Activated B cell treated with CpG ODN at 0.5 μM for 24 hours (primary cell): ENCODE measurements at regions of chr19 and their contacts with region 1.

Region 1: GRCh38 chr19:47063874-47064273 is 15.4 kb upstream of the TMEM160 start:
- DNase-seq: no peak
- ATAC-seq: no peak
- H3K4me3 Mint-ChIP-seq: no peak overlapping the region
- H3K27ac Mint-ChIP-seq: no peak overlapping the region
- H3K4me1 Mint-ChIP-seq: no peaks in the 10 kb centered on the region
- H3K27me3 Mint-ChIP-seq: no peaks in the 10 kb centered on the region
- CTCF ChIP-seq: no peak

Region 2: DNA sequence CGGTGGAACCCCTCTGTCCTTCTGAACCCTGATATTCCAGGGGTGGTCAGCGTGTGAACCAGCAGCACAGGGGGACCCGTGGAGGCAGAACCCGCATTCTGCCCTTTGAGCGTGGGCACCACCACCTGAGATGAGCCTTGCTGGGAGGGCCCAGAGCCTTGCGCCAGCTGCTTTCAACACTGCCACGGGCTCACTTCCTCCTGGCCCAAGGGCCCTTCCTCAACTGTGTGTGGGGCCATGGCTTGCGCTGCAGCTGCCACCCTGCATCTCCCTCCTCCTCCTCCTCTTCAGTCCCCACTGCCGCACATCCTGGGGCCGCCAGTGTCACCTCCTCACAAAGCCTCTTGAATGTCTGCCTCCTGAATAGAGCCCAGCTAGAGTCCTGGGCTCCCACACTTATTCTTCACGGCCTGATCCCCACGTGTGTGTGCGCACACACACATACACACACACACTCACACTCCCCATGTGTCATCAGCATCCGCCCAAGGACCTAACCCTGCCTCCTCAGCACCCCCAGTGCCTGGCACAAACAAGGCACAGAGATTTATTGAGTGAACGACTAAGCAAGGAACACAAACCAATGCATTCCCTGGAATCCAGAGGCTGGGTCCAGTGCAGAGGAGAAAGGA is 11.4 kb after region 1 on chr19:
- CTCF ChIA-PET with region 1: no interaction called
- POLR2A ChIA-PET with region 1: interaction called, 14 read pairs
- intact Hi-C with region 1: no loop called
- DNase-seq: no peak
- ATAC-seq: no peak
- H3K4me3 Mint-ChIP-seq: no peak overlapping the region
- H3K27ac Mint-ChIP-seq: no peak overlapping the region
- H3K4me1 Mint-ChIP-seq: peaks cover 4% of the 10 kb centered on the region
- H3K27me3 Mint-ChIP-seq: no peaks in the 10 kb centered on the region
- CTCF ChIP-seq: no peak